ENCODE measurements at regions of chr19 and their contacts with region 1.

Region 1: DNA sequence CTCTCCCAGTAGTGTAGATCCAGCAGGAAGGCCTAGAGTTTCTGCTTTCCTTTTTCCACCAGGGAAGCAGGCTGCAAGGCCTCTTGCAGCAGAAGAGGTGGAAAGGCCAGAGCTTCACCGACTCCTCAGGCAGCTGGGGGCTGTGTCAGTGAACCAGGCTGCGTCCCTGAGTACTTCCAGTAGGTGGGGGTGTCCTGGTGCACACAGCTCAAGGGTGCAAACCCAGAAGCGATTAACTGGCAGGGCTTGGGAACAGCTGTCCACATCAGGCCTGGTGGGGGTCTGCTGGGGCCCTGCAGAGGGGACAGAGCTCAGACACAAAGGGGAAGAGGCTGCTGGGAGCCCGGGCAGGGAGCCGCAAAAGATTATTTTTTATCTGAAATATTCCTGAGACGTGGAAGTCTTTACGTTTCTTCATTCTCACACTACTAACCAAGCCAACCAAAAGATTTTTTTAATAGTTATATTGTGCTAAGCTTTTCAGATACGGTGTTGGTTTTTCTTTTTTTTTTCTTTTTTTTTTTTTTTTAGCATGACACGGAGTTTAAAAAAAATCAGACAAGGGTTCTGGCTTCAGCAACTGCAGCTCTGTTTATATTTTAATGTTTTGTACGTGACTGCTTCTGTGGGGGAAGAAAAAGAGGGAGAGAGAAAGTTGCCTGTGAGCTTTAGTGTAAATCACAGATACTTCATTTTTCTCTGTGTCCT is 11.0 kb downstream of the TSHZ3 start:
- H3K4me3 ChIP-seq: no peak overlapping the region
- H3K27ac ChIP-seq: no peak overlapping the region
- H3K4me1 ChIP-seq: peaks cover 47% of the 10 kb centered on the region
- CTCF ChIP-seq: peak; percentile 90

Region 2: DNA sequence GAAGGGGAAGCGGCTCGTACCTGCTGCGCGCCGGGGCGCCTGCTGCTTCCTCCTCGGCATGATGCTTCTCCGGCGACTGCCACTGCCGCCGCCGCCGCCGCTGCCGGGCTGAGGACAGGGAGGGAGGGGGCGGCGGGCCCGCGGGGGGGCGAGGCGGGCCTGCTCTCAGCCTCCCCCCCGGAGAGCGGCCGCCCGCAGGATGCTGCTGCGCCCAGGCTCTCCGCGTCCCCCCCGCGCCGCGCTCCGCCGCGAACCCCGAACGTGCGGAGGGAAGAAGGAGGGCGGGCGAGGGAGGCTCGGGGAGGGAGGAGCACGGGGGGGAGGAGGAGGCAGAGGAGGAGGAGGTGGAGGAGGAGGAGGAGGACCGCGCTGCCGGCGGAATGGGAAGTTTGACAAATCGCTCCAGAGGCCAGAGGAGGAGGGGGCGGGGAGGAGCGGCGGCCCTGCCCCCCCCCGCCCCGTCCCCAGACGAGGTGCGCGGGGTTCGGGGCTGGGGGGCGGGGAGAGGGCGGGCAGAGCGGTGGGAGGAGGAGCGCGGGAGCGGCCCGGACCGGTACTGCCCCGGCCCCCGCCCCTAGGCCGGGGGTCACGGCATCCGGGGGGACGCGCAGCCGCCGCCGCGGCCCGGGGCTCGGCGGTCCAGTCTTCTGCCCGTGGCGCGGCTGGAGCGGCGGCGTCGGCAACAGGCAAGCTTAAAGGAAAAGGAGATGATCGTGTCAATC is 11.1 kb after region 1 on chr19 and contains the start of gene TSHZ3:
- CTCF ChIA-PET with region 1: interaction called, 17 read pairs
- POLR2A ChIA-PET with region 1: interaction called, 10 read pairs
- H3K4me3 ChIP-seq: peak within 1 kb of the TSS; percentile 63
- H3K27ac ChIP-seq: peak within 1 kb of the TSS; percentile 97
- H3K4me1 ChIP-seq: peaks cover 23% of the 10 kb centered on the region
- CTCF ChIP-seq: no peak

Region 3: DNA sequence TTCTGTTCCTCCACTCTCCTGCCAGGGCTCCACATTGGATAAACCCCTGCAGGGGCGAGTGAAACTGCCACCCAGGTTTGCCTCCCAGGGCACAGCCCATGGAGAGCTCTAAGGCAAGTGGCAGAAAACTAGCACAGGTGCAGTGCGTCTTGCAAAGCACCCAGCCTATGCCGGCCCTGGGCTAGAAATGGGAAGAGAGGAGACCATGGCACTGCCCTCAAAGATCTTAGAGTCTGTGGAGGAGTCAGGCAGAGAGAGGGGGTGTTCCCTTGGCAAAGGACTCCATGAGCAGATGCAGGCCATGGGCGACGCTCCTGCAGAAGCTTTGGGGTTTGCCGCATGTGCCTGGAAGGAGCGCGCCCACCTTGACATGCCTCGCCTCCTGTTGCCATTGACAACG is 28.8 kb after region 1 on chr19:
- CTCF ChIA-PET with region 1: no interaction called
- POLR2A ChIA-PET with region 1: no interaction called
- H3K4me3 ChIP-seq: no peak overlapping the region
- H3K27ac ChIP-seq: no peak overlapping the region
- H3K4me1 ChIP-seq: peaks cover 8% of the 10 kb centered on the region
- CTCF ChIP-seq: no peak

Region 4: GRCh38 chr19:31418035-31418434 is 79.8 kb after region 1 on chr19:
- CTCF ChIA-PET with region 1: no interaction called
- POLR2A ChIA-PET with region 1: no interaction called
- H3K4me3 ChIP-seq: no peak overlapping the region
- H3K27ac ChIP-seq: no peak overlapping the region
- H3K4me1 ChIP-seq: peaks cover 7% of the 10 kb centered on the region
- CTCF ChIP-seq: no peak

Measured in HEK293 (cell line).